ENCODE measurements at regions of chr12 and their contacts with region 1.

Region 1: DNA sequence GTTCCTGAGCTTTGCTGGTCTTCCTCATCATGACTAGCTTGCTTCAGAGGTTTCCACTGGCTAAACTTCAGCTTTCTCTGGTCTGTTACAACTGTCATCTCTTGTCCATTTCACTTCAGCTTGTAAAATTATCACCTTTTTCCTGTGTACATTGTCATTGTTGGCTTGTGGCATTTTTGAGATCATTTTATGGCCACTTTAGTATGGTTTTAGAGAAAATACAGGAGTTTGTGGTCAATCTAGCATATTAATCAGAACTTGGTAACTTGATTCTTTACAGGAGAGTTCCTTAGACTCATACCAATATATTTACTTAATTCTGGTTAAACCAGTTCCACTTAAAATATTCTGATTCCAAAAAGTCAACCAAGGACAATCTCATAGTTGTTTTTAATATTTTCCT is 235.9 kb upstream of the KITLG start:
- DNase-seq: no peak

Region 2: GRCh38 chr12:88716240-88716639 is 100.0 kb before region 1 on chr12:
- intact Hi-C with region 1: no loop called
- DNase-seq: no peak

Region 3: GRCh38 chr12:88784166-88784565 is 32.0 kb before region 1 on chr12:
- intact Hi-C with region 1: no loop called
- DNase-seq: no peak

Region 4: DNA sequence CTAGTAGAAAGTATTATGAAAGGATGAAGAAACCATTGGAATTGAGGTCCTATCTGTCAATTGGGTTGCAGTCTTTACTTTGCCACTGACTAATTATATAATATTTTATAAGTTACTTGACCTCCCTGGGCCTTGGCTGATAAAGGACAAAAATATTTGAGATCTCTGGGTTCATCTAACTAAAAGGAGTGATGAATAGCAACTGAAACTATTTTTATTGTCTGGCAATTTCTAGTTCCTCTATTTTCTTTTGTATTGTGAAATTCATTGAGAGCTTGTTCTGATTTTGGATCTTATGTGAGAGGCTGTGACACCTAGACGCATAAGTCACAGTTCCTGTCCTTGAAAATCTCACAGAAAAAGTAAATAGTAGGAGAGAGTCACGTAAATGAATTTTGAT is 1308.1 kb after region 1 on chr12:
- intact Hi-C with region 1: loop called in 1 of 2 experiments (anchors 10 kb)
- DNase-seq: no peak